Gastrocnemius medialis (tissue), 4 donors: ENCODE measurements at regions of chr4 and their contacts with region 1.

Region 1: DNA sequence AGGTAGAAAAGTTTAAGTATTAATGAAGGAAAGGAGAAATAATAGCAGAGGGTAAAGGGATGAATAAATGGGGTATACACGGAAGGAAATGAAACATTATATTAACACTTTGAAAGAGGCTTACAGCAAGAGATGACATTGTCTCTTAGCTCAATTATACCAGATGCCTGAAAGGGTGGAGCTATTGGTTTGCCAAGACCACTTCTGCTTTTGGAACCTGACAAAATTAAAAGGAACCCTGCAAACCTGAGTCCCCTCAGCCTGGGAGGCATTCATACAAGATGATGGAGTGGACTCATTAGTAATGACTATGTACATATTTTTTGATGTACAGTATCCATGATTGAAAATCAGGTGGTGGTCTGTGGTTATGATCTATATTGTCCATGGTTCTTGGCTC is 45.1 kb upstream of the HPF1 start:
- DNase-seq: no peak
- ATAC-seq: no peak
- H3K4me3 ChIP-seq: no peak overlapping the region
- H3K27ac ChIP-seq: no peak overlapping the region
- H3K4me1 ChIP-seq: peaks cover 0 to 4% of the 10 kb centered on the region in 2 donors
- H3K27me3 ChIP-seq: no peaks in the 10 kb centered on the region
- CTCF ChIP-seq: no peak
- POLR2A ChIP-seq: no peak

Region 2: GRCh38 chr4:169566021-169566818 is 236.7 kb before region 1 on chr4:
- in situ Hi-C with region 1: no loop called
- intact Hi-C with region 1: no loop called
- DNase-seq: no peak
- ATAC-seq: peak in 1 of 2 donors; percentile 47
- H3K4me3 ChIP-seq: no peak overlapping the region
- H3K27ac ChIP-seq: no peak overlapping the region
- H3K4me1 ChIP-seq: no peaks in the 10 kb centered on the region
- H3K27me3 ChIP-seq: no peaks in the 10 kb centered on the region
- CTCF ChIP-seq: peak in 4 of 5 experiments; percentile 16 to 64 (median 44)
- POLR2A ChIP-seq: no peak

Region 3: DNA sequence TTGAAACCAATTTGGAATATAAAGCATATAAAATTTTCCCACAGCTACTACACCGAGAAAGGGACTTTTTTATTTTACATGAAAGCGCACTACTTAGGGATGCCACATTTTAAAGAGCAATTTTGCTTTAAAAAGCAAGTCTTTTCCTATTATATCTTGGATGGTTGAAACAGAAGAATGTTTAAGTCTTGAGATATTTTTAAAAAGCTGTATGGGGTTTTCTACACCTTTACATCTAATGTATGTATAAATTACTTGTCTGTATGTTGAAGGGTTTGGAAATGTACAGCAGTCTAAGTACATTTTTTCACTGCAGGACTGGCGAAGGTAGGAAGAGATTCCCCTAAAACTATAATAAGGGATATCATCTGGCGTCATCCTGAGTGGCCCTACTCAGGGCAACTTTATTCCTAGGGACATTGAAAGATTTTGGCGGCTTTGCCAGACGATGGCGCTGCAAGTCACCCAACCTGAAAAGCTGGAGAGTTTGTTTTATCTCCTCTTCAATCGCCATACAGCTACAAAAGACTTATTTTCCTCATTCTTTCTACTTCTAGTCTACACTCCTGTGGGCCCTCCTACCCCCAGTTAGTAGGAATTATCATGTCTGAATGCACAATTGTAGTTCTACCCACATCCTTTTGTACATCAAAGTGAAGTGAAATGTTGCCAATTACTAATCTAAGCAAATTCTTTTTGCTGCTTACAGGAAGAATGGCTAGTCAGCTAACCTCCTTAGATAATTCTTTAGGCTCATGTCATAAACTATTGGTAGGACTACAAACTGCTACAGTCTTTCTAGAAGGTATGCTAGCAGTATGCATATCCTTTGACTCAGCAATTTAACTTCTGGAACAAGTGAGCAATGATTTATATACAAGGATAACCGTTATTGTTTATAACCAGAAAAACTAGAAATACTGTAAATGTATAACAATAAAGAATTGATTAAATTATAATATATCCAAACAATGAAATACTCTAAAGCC is 189.7 kb before region 1 on chr4:
- in situ Hi-C with region 1: no loop called
- intact Hi-C with region 1: no loop called
- DNase-seq: peak; percentile 53 to 72
- ATAC-seq: peak; percentile 77 to 82
- H3K4me3 ChIP-seq: peak overlapping the region; percentile 61 to 92 (median 92)
- H3K27ac ChIP-seq: peak overlapping the region; percentile 93 to 99 (median 96)
- H3K4me1 ChIP-seq: peaks cover 13 to 15% of the 10 kb centered on the region in 2 donors
- H3K27me3 ChIP-seq: no peaks in the 10 kb centered on the region
- CTCF ChIP-seq: peak; percentile 41 to 69 (median 53)
- POLR2A ChIP-seq: no peak

Region 4: GRCh38 chr4:170047771-170048354 is 245.0 kb after region 1 on chr4:
- in situ Hi-C with region 1: loop called in 2 of 4 experiments (anchors 10 kb)
- intact Hi-C with region 1: no loop called
- DNase-seq: peak in 1 of 2 donors; percentile 15
- ATAC-seq: no peak
- H3K4me3 ChIP-seq: no peak overlapping the region
- H3K27ac ChIP-seq: no peak overlapping the region
- H3K4me1 ChIP-seq: no peaks in the 10 kb centered on the region
- H3K27me3 ChIP-seq: no peaks in the 10 kb centered on the region
- CTCF ChIP-seq: peak; percentile 67 to 80 (median 71)
- POLR2A ChIP-seq: no peak